ENCODE measurements at regions of chr18 and their contacts with region 1.

Region 1: GRCh38 chr18:13823707-13824395 is at the start of gene MC5R:
- DNase-seq: peak; percentile 79
- ATAC-seq: peak; percentile 91
- H3K4me3 ChIP-seq: peak within 1 kb of the TSS in 3 of 5 experiments; percentile 18 to 50 (median 31)
- H3K4me3 Mint-ChIP-seq: peak within 1 kb of the TSS; percentile 71
- H3K27ac ChIP-seq: no peak within 1 kb of the TSS
- H3K27ac Mint-ChIP-seq: no peak within 1 kb of the TSS
- H3K4me1 ChIP-seq: peaks cover 3 to 6% of the 10 kb centered on the region in 2 donors
- H3K4me1 Mint-ChIP-seq: peaks cover 8% of the 10 kb centered on the region
- H3K27me3 ChIP-seq: peaks cover 0 to 23% (median 6%) of the 10 kb centered on the region in 4 experiments
- H3K27me3 Mint-ChIP-seq: peaks cover 38% of the 10 kb centered on the region
- CTCF ChIP-seq: peak; percentile 68
- total RNA-seq, gene MC5R: not detected in 2 replicates

Region 2: GRCh38 chr18:12271376-12272235 is 1552.2 kb before region 1 on chr18:
- CTCF ChIA-PET with region 1: no interaction called
- POLR2A ChIA-PET with region 1: no interaction called
- intact Hi-C with region 1: no loop called
- DNase-seq: peak; percentile 72
- ATAC-seq: peak; percentile 79
- H3K4me3 ChIP-seq: peak overlapping the region in 4 of 5 experiments; percentile 28 to 58 (median 48)
- H3K4me3 Mint-ChIP-seq: peak overlapping the region; percentile 67
- H3K27ac ChIP-seq: no peak overlapping the region
- H3K27ac Mint-ChIP-seq: no peak overlapping the region
- H3K4me1 ChIP-seq: peaks cover 4 to 8% of the 10 kb centered on the region in 2 donors
- H3K4me1 Mint-ChIP-seq: peaks cover 7% of the 10 kb centered on the region
- H3K27me3 ChIP-seq: peaks cover 0 to 15% (median 5%) of the 10 kb centered on the region in 4 experiments
- H3K27me3 Mint-ChIP-seq: peaks cover 7% of the 10 kb centered on the region
- CTCF ChIP-seq: peak; percentile 60

Region 3: GRCh38 chr18:12308386-12309100 is 1515.3 kb before region 1 on chr18:
- CTCF ChIA-PET with region 1: no interaction called
- POLR2A ChIA-PET with region 1: no interaction called
- intact Hi-C with region 1: no loop called
- DNase-seq: peak; percentile 57
- ATAC-seq: peak; percentile 59
- H3K4me3 ChIP-seq: peak overlapping the region; percentile 52 to 81 (median 61)
- H3K4me3 Mint-ChIP-seq: peak overlapping the region; percentile 86
- H3K27ac ChIP-seq: peak overlapping the region; percentile 18 to 38
- H3K27ac Mint-ChIP-seq: peak overlapping the region; percentile 87
- H3K4me1 ChIP-seq: peaks cover 21 to 34% of the 10 kb centered on the region in 2 donors
- H3K4me1 Mint-ChIP-seq: peaks cover 30% of the 10 kb centered on the region
- H3K27me3 ChIP-seq: peaks cover 0 to 22% (median 11%) of the 10 kb centered on the region in 4 experiments
- H3K27me3 Mint-ChIP-seq: peaks cover 28% of the 10 kb centered on the region
- CTCF ChIP-seq: no peak

Region 4: DNA sequence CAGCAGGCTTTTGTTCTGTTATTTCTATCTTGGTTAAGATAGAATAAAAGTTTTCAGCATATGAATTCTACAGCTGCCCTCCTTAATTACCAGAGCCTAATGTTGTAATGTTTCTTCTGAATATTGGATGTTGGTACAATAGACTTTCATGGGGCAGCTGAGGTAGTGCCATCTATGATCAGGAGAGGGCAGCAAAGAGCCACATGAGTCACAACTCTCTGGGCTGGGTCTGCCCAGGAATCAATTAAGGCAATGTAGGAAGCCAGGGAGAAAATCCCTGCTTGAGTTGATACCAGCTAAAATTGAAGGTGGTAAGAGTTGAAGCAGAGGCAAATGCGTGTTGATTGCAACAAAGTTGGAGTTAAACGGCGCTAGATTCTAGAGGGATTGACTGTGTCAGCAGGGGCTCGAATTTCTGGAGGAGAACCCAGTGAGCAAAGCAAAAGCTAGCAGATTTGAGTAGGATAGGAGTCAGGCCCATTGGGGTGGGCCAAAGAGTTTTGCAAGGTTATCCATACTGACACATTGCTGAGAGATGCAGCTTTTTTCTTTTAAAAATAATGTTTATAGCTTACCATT is 10.5 kb before region 1 on chr18:
- CTCF ChIA-PET with region 1: interaction called, 16 read pairs
- POLR2A ChIA-PET with region 1: no interaction called
- intact Hi-C with region 1: no loop called
- DNase-seq: peak; percentile 56
- ATAC-seq: peak; percentile 64
- H3K4me3 ChIP-seq: no peak overlapping the region
- H3K4me3 Mint-ChIP-seq: no peak overlapping the region
- H3K27ac ChIP-seq: no peak overlapping the region
- H3K27ac Mint-ChIP-seq: no peak overlapping the region
- H3K4me1 ChIP-seq: no peaks in the 10 kb centered on the region
- H3K4me1 Mint-ChIP-seq: no peaks in the 10 kb centered on the region
- H3K27me3 ChIP-seq: peaks cover 0 to 3% (median 0%) of the 10 kb centered on the region in 4 experiments
- H3K27me3 Mint-ChIP-seq: peaks cover 4% of the 10 kb centered on the region
- CTCF ChIP-seq: peak; percentile 93

Region 5: GRCh38 chr18:13836559-13836958 is 12.7 kb after region 1 on chr18:
- CTCF ChIA-PET with region 1: no interaction called
- POLR2A ChIA-PET with region 1: no interaction called
- intact Hi-C with region 1: no loop called
- DNase-seq: no peak
- ATAC-seq: no peak
- H3K4me3 ChIP-seq: no peak overlapping the region
- H3K4me3 Mint-ChIP-seq: no peak overlapping the region
- H3K27ac ChIP-seq: no peak overlapping the region
- H3K27ac Mint-ChIP-seq: no peak overlapping the region
- H3K4me1 ChIP-seq: no peaks in the 10 kb centered on the region
- H3K4me1 Mint-ChIP-seq: no peaks in the 10 kb centered on the region
- H3K27me3 ChIP-seq: no peaks in the 10 kb centered on the region
- H3K27me3 Mint-ChIP-seq: peaks cover 32% of the 10 kb centered on the region
- CTCF ChIP-seq: no peak

Region 6: GRCh38 chr18:14053661-14054060 is 229.8 kb after region 1 on chr18:
- CTCF ChIA-PET with region 1: no interaction called
- POLR2A ChIA-PET with region 1: no interaction called
- intact Hi-C with region 1: no loop called
- DNase-seq: no peak
- ATAC-seq: no peak
- H3K4me3 ChIP-seq: no peak overlapping the region
- H3K4me3 Mint-ChIP-seq: no peak overlapping the region
- H3K27ac ChIP-seq: no peak overlapping the region
- H3K27ac Mint-ChIP-seq: no peak overlapping the region
- H3K4me1 ChIP-seq: no peaks in the 10 kb centered on the region
- H3K4me1 Mint-ChIP-seq: peaks cover 1% of the 10 kb centered on the region
- H3K27me3 ChIP-seq: no peaks in the 10 kb centered on the region
- H3K27me3 Mint-ChIP-seq: no peaks in the 10 kb centered on the region
- CTCF ChIP-seq: no peak